ENCODE measurements at regions of chr3 and their contacts with region 1.

Region 1: GRCh38 chr3:195850857-195851543 is 39.3 kb upstream of the MUC4 start:
- DNase-seq: peak; percentile 91
- H3K4me3 Mint-ChIP-seq: peak overlapping the region; percentile 26
- H3K27ac Mint-ChIP-seq: no peak overlapping the region
- H3K4me1 Mint-ChIP-seq: peaks cover 42% of the 10 kb centered on the region
- H3K27me3 Mint-ChIP-seq: no peaks in the 10 kb centered on the region
- CTCF ChIP-seq: peak; percentile 100

Region 2: DNA sequence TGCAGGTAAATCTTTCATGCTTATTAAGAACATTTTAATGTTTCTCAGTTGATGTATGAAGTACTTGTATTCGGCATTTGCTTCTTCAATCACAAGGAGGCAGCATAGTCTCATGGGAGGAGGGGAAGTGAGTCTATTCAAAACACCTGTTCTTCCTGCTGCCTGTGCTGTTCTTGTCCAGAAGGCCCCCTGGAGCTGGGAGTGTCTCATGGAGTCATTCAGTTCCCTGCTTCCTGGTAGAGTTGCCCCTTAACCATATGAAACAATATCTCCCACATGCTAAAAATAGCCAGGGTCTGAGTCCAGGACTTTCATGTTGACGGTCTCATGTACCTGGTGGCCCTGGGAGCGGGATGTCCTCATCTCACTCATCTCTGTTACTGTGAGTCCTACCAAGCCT is 292.4 kb before region 1 on chr3:
- CTCF ChIA-PET with region 1: interaction called, 3 read pairs
- intact Hi-C with region 1: loop called (anchors 1 kb)
- DNase-seq: peak; percentile 78
- H3K4me3 Mint-ChIP-seq: no peak overlapping the region
- H3K27ac Mint-ChIP-seq: no peak overlapping the region
- H3K4me1 Mint-ChIP-seq: peaks cover 29% of the 10 kb centered on the region
- H3K27me3 Mint-ChIP-seq: peaks cover 18% of the 10 kb centered on the region
- CTCF ChIP-seq: peak; percentile 71

Region 3: GRCh38 chr3:195716865-195717210 is 134.2 kb before region 1 on chr3:
- CTCF ChIA-PET with region 1: interaction called, 3 read pairs
- intact Hi-C with region 1: loop called (anchors 10 kb)
- DNase-seq: peak; percentile 53
- H3K4me3 Mint-ChIP-seq: peak overlapping the region; percentile 10
- H3K27ac Mint-ChIP-seq: peak overlapping the region; percentile 93
- H3K4me1 Mint-ChIP-seq: peaks cover 73% of the 10 kb centered on the region
- H3K27me3 Mint-ChIP-seq: no peaks in the 10 kb centered on the region
- CTCF ChIP-seq: no peak

Region 4: GRCh38 chr3:195748661-195749060 is 102.3 kb before region 1 on chr3:
- CTCF ChIA-PET with region 1: interaction called, 3 read pairs
- intact Hi-C with region 1: loop called (anchors 10 kb)
- DNase-seq: no peak
- H3K4me3 Mint-ChIP-seq: no peak overlapping the region
- H3K27ac Mint-ChIP-seq: no peak overlapping the region
- H3K4me1 Mint-ChIP-seq: no peaks in the 10 kb centered on the region
- H3K27me3 Mint-ChIP-seq: no peaks in the 10 kb centered on the region
- CTCF ChIP-seq: no peak